Caco-2 (cell line): ENCODE measurements at regions of chr1 and their contacts with region 1.

Region 1: DNA sequence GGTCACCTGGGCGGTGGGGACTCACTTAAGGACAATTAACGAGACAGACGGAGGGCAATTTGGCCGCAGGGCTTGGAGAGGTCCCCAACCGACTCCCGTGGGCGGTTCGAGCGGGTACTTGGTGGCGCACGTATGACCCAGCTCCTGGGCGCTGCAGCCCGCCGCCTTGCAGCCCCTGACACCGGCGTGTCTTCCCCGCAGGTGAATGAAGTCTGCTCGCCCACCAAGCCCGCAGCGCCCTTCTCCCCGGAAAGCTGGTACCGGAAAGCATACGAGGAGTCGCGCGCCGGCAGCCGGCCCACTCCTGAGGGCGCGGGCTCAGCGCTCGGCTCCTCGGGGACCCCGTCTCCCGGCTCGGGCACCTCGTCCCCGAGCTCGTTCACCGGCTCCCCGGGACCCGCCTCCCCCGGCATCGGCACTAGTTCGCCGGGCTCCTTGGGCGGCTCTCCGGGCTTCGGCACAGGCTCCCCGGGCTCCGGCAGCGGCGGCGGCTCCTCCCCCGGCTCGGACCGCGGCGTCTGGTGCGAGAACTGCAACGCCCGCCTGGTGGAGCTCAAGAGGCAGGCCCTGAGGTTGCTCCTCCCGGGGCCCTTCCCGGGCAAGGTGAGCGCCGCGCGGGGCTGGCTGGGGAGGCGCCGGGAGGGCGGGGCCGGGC is 1.4 kb downstream of the KIF26B start:
- DNase-seq: peak; percentile 89 to 94
- H3K4me3 ChIP-seq: peak overlapping the region; percentile 63
- H3K4me3 Mint-ChIP-seq: peak overlapping the region; percentile 97
- H3K27ac Mint-ChIP-seq: no peak overlapping the region
- H3K4me1 ChIP-seq: peaks cover 8% of the 10 kb centered on the region
- H3K4me1 Mint-ChIP-seq: no peaks in the 10 kb centered on the region
- H3K27me3 ChIP-seq: no peaks in the 10 kb centered on the region; the same call in none of the 2 replicates
- H3K27me3 Mint-ChIP-seq: peaks cover 7% of the 10 kb centered on the region
- CTCF ChIP-seq: peak; percentile 82 to 84

Region 2: GRCh38 chr1:244674446-244674845 is 481.8 kb before region 1 on chr1:
- CTCF ChIA-PET with region 1: no interaction called
- POLR2A ChIA-PET with region 1: no interaction called
- intact Hi-C with region 1: no loop called
- DNase-seq: no peak
- H3K4me3 ChIP-seq: no peak overlapping the region
- H3K4me3 Mint-ChIP-seq: no peak overlapping the region
- H3K27ac Mint-ChIP-seq: no peak overlapping the region
- H3K4me1 ChIP-seq: no peaks in the 10 kb centered on the region
- H3K4me1 Mint-ChIP-seq: no peaks in the 10 kb centered on the region
- H3K27me3 ChIP-seq: no peaks in the 10 kb centered on the region
- H3K27me3 Mint-ChIP-seq: no peaks in the 10 kb centered on the region
- CTCF ChIP-seq: no peak

Region 3: GRCh38 chr1:245079021-245079609 is 77.1 kb before region 1 on chr1:
- CTCF ChIA-PET with region 1: no interaction called
- POLR2A ChIA-PET with region 1: no interaction called
- intact Hi-C with region 1: loop called (anchors 1 kb)
- DNase-seq: peak in 1 of 2 experiments; percentile 19
- H3K4me3 ChIP-seq: no peak overlapping the region
- H3K4me3 Mint-ChIP-seq: no peak overlapping the region
- H3K27ac Mint-ChIP-seq: no peak overlapping the region
- H3K4me1 ChIP-seq: no peaks in the 10 kb centered on the region
- H3K4me1 Mint-ChIP-seq: no peaks in the 10 kb centered on the region
- H3K27me3 ChIP-seq: no peaks in the 10 kb centered on the region
- H3K27me3 Mint-ChIP-seq: no peaks in the 10 kb centered on the region
- CTCF ChIP-seq: peak; percentile 58 to 70

Region 4: GRCh38 chr1:245277276-245277675 is 121.1 kb after region 1 on chr1:
- CTCF ChIA-PET with region 1: no interaction called
- POLR2A ChIA-PET with region 1: no interaction called
- intact Hi-C with region 1: loop called (anchors 1 kb)
- DNase-seq: peak; percentile 54 to 58
- H3K4me3 ChIP-seq: no peak overlapping the region
- H3K4me3 Mint-ChIP-seq: no peak overlapping the region
- H3K27ac Mint-ChIP-seq: no peak overlapping the region
- H3K4me1 ChIP-seq: peaks cover 7% of the 10 kb centered on the region; the same call in 1 of the 2 replicates
- H3K4me1 Mint-ChIP-seq: peaks cover 6% of the 10 kb centered on the region
- H3K27me3 ChIP-seq: no peaks in the 10 kb centered on the region
- H3K27me3 Mint-ChIP-seq: no peaks in the 10 kb centered on the region
- CTCF ChIP-seq: peak; percentile 31 to 69

Region 5: GRCh38 chr1:245290836-245291235 is 134.6 kb after region 1 on chr1:
- CTCF ChIA-PET with region 1: no interaction called
- POLR2A ChIA-PET with region 1: no interaction called
- intact Hi-C with region 1: no loop called
- DNase-seq: no peak
- H3K4me3 ChIP-seq: no peak overlapping the region
- H3K4me3 Mint-ChIP-seq: no peak overlapping the region
- H3K27ac Mint-ChIP-seq: no peak overlapping the region
- H3K4me1 ChIP-seq: no peaks in the 10 kb centered on the region
- H3K4me1 Mint-ChIP-seq: no peaks in the 10 kb centered on the region
- H3K27me3 ChIP-seq: no peaks in the 10 kb centered on the region
- H3K27me3 Mint-ChIP-seq: no peaks in the 10 kb centered on the region
- CTCF ChIP-seq: no peak

Region 6: DNA sequence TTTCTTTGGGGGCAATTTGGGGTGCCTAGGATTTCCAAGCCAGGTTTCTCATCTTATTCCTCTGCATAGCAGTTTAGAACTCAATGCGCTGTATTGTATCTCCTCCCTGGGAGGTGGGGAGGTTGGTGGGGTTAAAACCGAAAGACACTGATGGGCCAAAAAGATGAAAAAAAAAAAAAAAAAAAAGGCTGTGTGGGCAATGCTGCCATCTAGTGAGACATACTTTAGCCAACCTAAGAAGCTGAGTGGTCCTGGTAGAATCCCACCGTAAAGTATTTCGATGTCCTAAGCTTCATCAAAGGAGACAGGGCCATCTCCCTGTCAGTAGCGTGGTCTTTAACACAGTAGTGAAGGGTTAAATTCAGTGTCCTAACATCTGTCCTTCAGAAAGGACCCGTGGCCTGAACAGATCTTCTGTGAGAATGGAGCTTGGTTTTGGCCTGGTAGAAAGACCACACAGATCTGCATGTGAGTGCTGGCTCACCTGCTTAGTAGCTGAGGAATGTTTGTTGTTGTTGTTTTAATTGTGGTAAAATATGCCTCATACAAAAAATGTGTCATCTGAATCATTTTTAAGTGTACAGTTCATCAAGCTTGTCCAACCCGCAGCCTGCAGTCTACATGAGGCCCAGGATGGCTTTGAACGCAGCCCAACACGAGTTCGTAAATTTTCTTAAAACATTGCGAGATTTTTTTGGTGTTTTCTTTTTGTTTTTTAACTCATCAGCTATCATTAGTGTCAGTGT is 224.8 kb after region 1 on chr1:
- CTCF ChIA-PET with region 1: interaction called, 15 read pairs
- POLR2A ChIA-PET with region 1: no interaction called
- intact Hi-C with region 1: loop called (anchors 1 kb)
- DNase-seq: no peak
- H3K4me3 ChIP-seq: no peak overlapping the region
- H3K4me3 Mint-ChIP-seq: no peak overlapping the region
- H3K27ac Mint-ChIP-seq: no peak overlapping the region
- H3K4me1 ChIP-seq: peaks cover 9% of the 10 kb centered on the region
- H3K4me1 Mint-ChIP-seq: peaks cover 8% of the 10 kb centered on the region
- H3K27me3 ChIP-seq: no peaks in the 10 kb centered on the region
- H3K27me3 Mint-ChIP-seq: no peaks in the 10 kb centered on the region
- CTCF ChIP-seq: peak in 1 of 2 experiments; percentile 30

Region 7: DNA sequence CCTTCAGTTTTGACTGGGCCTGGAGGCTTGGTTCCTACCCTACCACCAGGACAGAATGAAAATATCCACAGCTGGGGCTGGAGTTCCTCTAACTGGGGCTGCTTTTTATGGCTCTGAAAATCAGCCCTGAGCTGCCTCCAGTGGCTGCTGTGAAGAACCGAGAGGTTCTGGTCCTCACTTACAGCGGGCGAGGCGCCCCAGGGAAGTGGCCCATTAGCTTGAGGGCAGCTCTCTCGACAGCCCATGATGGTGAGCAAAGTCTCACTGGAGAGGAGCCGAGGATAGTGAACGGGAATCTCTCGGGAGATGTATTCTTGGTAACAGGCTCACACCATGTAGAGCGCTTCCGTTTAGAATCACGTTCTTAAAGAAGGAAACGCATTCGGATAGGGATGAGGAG is 458.3 kb after region 1 on chr1:
- CTCF ChIA-PET with region 1: no interaction called
- POLR2A ChIA-PET with region 1: no interaction called
- intact Hi-C with region 1: loop called (anchors 2 kb)
- DNase-seq: no peak
- H3K4me3 ChIP-seq: no peak overlapping the region
- H3K4me3 Mint-ChIP-seq: no peak overlapping the region
- H3K27ac Mint-ChIP-seq: no peak overlapping the region
- H3K4me1 ChIP-seq: peaks cover 35% of the 10 kb centered on the region
- H3K4me1 Mint-ChIP-seq: peaks cover 25% of the 10 kb centered on the region
- H3K27me3 ChIP-seq: no peaks in the 10 kb centered on the region
- H3K27me3 Mint-ChIP-seq: no peaks in the 10 kb centered on the region
- CTCF ChIP-seq: no peak

Region 8: GRCh38 chr1:245807306-245807705 is 651.1 kb after region 1 on chr1:
- CTCF ChIA-PET with region 1: interaction called, 3 read pairs
- POLR2A ChIA-PET with region 1: no interaction called
- intact Hi-C with region 1: loop called (anchors 10 kb)
- DNase-seq: no peak
- H3K4me3 ChIP-seq: no peak overlapping the region
- H3K4me3 Mint-ChIP-seq: no peak overlapping the region
- H3K27ac Mint-ChIP-seq: no peak overlapping the region
- H3K4me1 ChIP-seq: peaks cover 40% of the 10 kb centered on the region
- H3K4me1 Mint-ChIP-seq: peaks cover 30% of the 10 kb centered on the region
- H3K27me3 ChIP-seq: no peaks in the 10 kb centered on the region
- H3K27me3 Mint-ChIP-seq: no peaks in the 10 kb centered on the region
- CTCF ChIP-seq: no peak

Region 9: GRCh38 chr1:246002725-246003441 is 846.7 kb after region 1 on chr1:
- CTCF ChIA-PET with region 1: interaction called, 12 read pairs
- POLR2A ChIA-PET with region 1: no interaction called
- intact Hi-C with region 1: loop called (anchors 1 kb)
- DNase-seq: peak; percentile 81 to 86
- H3K4me3 ChIP-seq: no peak overlapping the region
- H3K4me3 Mint-ChIP-seq: no peak overlapping the region
- H3K27ac Mint-ChIP-seq: no peak overlapping the region
- H3K4me1 ChIP-seq: peaks cover 8% of the 10 kb centered on the region
- H3K4me1 Mint-ChIP-seq: peaks cover 22% of the 10 kb centered on the region
- H3K27me3 ChIP-seq: no peaks in the 10 kb centered on the region
- H3K27me3 Mint-ChIP-seq: no peaks in the 10 kb centered on the region
- CTCF ChIP-seq: peak; percentile 86 to 91